Endothelial cell of umbilical vein (primary cell): ENCODE measurements at regions of chr10 and their contacts with region 1.

Region 1: GRCh38 chr10:122112625-122113160 is 123.7 kb downstream of the TACC2 start:
- DNase-seq: peak; percentile 97
- H3K4me3 ChIP-seq: peak overlapping the region; percentile 49 to 59 (median 54)
- H3K27ac ChIP-seq: peak overlapping the region; percentile 100
- H3K4me1 ChIP-seq: peaks cover 42% of the 10 kb centered on the region
- H3K27me3 ChIP-seq: no peaks in the 10 kb centered on the region
- CTCF ChIP-seq: peak; percentile 43 to 53
- POLR2A ChIP-seq: peak; percentile 40

Region 2: DNA sequence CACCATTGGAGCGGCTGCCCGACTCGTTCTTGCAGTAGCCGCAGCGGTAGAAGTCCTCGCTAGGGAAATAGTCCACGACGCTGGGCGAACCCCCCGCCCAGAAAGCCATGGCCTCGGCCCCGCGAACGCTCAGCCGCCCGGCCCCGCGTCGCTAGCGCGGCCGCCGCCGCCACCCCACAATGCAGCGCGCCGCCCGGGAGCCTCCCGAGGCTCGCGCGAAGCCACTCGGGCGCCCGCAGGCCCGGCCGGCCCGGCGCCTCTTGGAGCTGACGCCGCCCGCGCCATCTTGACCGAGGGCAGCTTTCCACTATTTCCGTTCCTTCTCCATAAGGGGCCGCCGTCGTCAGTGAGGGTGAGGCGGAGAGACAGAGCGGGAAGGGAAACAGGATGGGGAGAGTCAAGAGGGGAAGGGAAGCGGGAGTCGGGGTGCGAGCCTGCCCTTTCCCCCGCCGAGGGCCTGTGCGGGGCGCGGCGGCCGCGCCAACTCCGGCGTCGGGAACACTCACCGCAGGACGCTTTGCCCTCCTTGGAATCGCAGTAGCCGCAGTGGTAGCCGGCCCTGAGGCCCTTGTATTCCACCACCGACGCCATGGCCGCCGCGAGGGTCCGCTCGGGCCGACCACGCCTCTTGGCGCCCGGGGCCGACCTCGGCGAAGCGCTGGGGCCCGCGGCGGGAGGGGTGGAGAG is 184.7 kb before region 1 on chr10 and contains the start of gene ATE1:
- CTCF ChIA-PET with region 1: no interaction called
- POLR2A ChIA-PET with region 1: no interaction called
- dilution Hi-C with region 1: no loop called
- intact Hi-C with region 1: loop called (anchors 1 kb)
- DNase-seq: peak; percentile 94
- H3K4me3 ChIP-seq: peak within 1 kb of the TSS; percentile 61 to 97 (median 93)
- H3K27ac ChIP-seq: peak within 1 kb of the TSS; percentile 91
- H3K4me1 ChIP-seq: peaks cover 11% of the 10 kb centered on the region
- H3K27me3 ChIP-seq: no peaks in the 10 kb centered on the region
- CTCF ChIP-seq: no peak
- POLR2A ChIP-seq: peak; percentile 83
- total RNA-seq, gene ATE1: 19.1 and 27.1 TPM in 2 replicates

Region 3: DNA sequence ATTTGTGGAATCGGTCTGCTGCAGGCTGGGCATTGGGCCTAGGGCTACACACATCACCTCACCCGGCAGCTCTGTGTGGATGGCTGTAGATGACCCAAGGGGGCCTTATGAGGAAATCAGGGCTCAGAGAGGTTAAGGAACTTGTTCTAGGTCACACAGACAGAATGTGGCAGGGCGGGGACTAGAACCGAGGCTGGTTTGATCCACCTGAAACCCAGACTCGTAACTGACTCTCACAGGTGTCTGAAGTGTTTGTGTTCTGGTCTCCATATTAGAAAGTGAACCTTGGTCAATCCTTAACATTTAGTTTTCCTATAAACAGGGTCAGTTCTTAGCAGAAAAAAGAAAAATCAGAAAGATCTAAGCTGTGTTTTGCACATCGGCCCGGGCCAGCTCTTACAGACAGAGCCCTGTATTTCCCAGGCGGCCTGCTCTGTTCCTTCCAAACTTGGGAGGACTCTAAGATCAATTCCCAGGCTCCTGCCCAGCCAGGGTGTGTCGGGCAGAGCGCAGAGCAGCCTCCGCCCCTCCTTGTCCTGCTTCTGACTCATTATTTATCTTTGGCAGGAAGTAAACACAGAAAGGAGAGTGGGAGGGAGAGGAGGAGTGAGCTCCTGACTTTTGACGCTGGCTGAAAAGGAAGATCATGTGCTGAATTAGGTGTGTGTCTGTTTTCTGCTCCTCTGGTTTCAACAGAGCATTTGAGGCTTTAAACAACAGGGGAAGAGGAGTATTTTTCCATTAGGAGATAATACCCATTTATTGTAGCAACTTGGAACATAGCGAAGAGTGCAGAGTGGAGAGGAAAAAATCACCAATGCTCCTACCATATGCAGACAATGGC is 49.6 kb before region 1 on chr10:
- CTCF ChIA-PET with region 1: interaction called, 12 read pairs
- POLR2A ChIA-PET with region 1: interaction called, 3 read pairs
- dilution Hi-C with region 1: no loop called
- intact Hi-C with region 1: loop called (anchors 1 kb)
- DNase-seq: peak; percentile 90
- H3K4me3 ChIP-seq: no peak overlapping the region
- H3K27ac ChIP-seq: peak overlapping the region; percentile 14
- H3K4me1 ChIP-seq: peaks cover 8% of the 10 kb centered on the region
- H3K27me3 ChIP-seq: no peaks in the 10 kb centered on the region
- CTCF ChIP-seq: no peak
- POLR2A ChIP-seq: no peak

Region 4: GRCh38 chr10:122181055-122181732 is 68.5 kb after region 1 on chr10:
- CTCF ChIA-PET with region 1: no interaction called
- POLR2A ChIA-PET with region 1: interaction called, 3 read pairs
- dilution Hi-C with region 1: no loop called
- intact Hi-C with region 1: loop called (anchors 2 kb)
- DNase-seq: peak; percentile 21
- H3K4me3 ChIP-seq: no peak overlapping the region
- H3K27ac ChIP-seq: no peak overlapping the region
- H3K4me1 ChIP-seq: peaks cover 28% of the 10 kb centered on the region
- H3K27me3 ChIP-seq: no peaks in the 10 kb centered on the region
- CTCF ChIP-seq: no peak
- POLR2A ChIP-seq: no peak